Aorta (tissue), 5 donors: ENCODE measurements at regions of chr14 and their contacts with region 1.

Region 1: DNA sequence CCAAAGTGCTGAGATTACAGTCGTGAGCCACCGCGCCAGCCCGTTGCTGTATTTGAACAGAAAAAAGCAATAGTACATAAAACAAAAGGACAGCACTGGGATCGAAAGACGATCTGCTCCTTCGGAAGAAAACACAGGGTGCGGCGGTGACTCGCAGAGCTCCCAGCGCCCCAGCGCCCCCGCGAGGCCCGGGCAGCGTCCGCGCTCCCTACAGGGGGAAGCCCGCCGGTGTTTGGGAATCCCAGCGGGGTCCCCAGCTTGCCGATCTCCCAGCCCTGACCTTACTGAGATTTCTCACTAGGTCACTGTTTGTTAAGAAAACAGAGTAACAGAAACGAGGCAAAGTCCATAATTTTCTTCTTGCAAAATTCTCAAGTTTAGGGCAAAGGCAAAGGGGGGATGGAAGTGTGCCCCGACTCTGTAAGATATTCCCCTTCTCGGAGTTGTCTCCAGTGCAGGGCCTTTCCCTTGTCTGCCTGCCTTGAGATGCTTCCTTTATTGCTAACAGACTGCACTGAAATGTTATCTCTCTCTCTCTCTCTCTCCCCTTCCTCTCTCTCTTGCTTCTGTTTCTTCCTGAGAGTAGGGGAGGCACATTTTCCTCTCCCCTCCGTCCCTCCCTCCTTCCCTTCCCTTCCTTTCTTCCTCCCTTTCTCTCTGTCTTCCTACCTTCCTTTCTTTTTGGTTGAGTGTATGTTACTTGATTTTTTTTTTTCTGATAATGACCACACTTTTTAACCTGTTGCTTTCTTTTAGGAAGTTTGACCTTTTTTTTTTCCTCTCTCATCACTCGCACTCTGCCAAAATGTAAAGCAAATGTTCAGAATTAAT is 91.9 kb downstream of the TMEM30B start:
- DNase-seq: peak; percentile 80 to 88
- ATAC-seq: peak; percentile 90
- H3K4me3 ChIP-seq: peak overlapping the region; percentile 29 to 30
- H3K27ac ChIP-seq: peak overlapping the region in 1 of 2 donors; percentile 4
- H3K4me1 ChIP-seq: no peaks in the 10 kb centered on the region
- H3K27me3 ChIP-seq: no peaks in the 10 kb centered on the region

Region 2: DNA sequence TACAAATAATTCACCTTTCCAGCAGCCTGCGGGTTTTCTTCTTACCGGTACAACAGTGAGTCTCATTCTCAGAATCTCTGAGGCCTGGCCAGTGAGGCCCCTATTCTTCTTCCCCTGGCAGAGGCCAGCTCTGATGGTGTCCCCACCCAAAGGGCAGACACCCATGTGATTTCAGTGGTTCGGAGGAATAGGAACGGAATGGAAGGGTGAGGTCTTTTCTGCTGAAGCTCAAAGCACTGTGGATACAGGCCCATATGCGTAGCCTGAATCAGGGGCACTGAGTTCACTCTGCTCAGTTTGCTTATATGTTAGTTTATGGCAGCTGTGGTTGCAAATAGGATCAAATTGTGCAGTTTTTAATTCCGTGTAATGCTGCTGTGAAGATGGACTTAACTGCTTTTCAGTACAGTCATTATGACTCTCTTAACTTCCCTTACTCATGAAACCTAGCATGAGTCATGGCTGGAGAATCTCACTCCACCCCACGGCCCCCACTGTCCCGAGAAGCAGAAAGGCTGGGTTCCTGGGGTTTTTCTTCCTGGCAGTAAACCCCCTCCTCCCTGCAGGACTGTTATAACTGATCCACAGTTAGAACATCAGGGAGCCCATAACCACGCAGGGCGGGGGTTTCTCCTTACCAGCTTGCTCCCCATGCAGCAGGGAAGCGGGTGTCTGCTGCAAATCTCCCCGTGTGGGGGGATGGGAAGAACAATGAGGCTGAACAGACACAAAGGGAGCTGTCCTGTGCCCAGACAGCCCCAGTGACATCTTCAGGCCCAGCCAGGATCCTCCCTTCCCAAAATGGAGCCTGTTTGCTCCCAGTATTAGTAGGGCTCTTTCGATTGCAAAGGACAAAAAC is 85.5 kb before region 1 on chr14:
- intact Hi-C with region 1: loop called in 1 of 2 experiments (anchors 10 kb)
- DNase-seq: peak; percentile 84 to 85
- ATAC-seq: peak; percentile 83
- H3K4me3 ChIP-seq: no peak overlapping the region
- H3K27ac ChIP-seq: peak overlapping the region; percentile 47 to 69
- H3K4me1 ChIP-seq: peaks cover 0 to 3% of the 10 kb centered on the region in 2 donors
- H3K27me3 ChIP-seq: no peaks in the 10 kb centered on the region

Region 3: GRCh38 chr14:61344437-61345150 is 155.4 kb after region 1 on chr14:
- intact Hi-C with region 1: no loop called
- DNase-seq: no peak
- ATAC-seq: no peak
- H3K4me3 ChIP-seq: no peak overlapping the region
- H3K27ac ChIP-seq: no peak overlapping the region
- H3K4me1 ChIP-seq: no peaks in the 10 kb centered on the region
- H3K27me3 ChIP-seq: no peaks in the 10 kb centered on the region